Activated CD4-positive, alpha-beta T cell treated with anti-CD3 and anti-CD28 coated beads, Interleukin-2, amount 10 ng/mL, durations not matched to agents 7 days and 5 days (primary cell): ENCODE measurements at regions of chr1 and their contacts with region 1.

Region 1: DNA sequence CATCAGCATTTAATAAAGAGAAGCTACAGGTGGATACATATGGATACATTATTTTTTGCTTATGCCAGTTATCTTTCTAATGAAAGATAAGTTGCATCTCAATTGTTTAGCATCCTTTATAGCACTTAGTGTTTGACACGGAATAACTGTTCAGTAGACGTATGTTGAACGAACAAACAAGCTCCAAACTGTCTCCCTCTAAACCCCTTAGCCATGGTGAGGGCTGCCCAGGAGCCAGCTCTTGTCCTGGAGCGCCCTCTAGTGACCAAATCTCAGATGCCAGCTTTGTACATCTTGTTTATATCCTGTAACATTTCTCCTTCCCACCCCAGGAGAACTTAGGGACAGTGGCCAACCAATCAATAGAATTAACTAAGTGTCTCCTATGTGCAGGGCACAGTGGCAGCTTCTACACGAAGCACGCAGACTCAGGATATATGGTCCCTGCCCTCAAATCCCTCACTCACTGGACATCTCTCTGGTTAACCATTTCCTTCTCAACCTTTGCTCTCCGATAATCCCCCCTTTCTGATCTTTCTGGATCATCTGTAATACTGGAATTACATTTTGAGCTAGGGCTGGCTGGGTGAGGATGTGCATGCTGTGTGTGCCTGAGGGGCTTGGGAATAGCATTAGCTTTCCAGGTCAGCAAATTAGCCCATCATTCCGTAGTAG is 22.9 kb downstream of the KCNA10 start:
- DNase-seq: peak; percentile 86
- H3K4me3 Mint-ChIP-seq: no peak overlapping the region
- H3K27ac Mint-ChIP-seq: no peak overlapping the region
- H3K4me1 Mint-ChIP-seq: peaks cover 4% of the 10 kb centered on the region
- H3K27me3 Mint-ChIP-seq: no peaks in the 10 kb centered on the region

Region 2: GRCh38 chr1:110196917-110197765 is 298.9 kb before region 1 on chr1:
- CTCF ChIA-PET with region 1: interaction called, 44 read pairs
- POLR2A ChIA-PET with region 1: no interaction called
- DNase-seq: peak; percentile 75
- H3K4me3 Mint-ChIP-seq: no peak overlapping the region
- H3K27ac Mint-ChIP-seq: no peak overlapping the region
- H3K4me1 Mint-ChIP-seq: no peaks in the 10 kb centered on the region
- H3K27me3 Mint-ChIP-seq: no peaks in the 10 kb centered on the region

Region 3: GRCh38 chr1:110407260-110408210 is 88.5 kb before region 1 on chr1 and contains the start of gene LAMTOR5:
- CTCF ChIA-PET with region 1: interaction called, 31 read pairs
- POLR2A ChIA-PET with region 1: no interaction called
- DNase-seq: peak; percentile 95
- H3K4me3 Mint-ChIP-seq: peak within 1 kb of the TSS; percentile 99
- H3K27ac Mint-ChIP-seq: peak within 1 kb of the TSS; percentile 100
- H3K4me1 Mint-ChIP-seq: peaks cover 22% of the 10 kb centered on the region
- H3K27me3 Mint-ChIP-seq: no peaks in the 10 kb centered on the region
- total RNA-seq, gene LAMTOR5: 113 to 120 TPM

Region 4: GRCh38 chr1:110425612-110426152 is 70.4 kb before region 1 on chr1:
- CTCF ChIA-PET with region 1: no interaction called
- POLR2A ChIA-PET with region 1: no interaction called
- DNase-seq: no peak
- H3K4me3 Mint-ChIP-seq: no peak overlapping the region
- H3K27ac Mint-ChIP-seq: no peak overlapping the region
- H3K4me1 Mint-ChIP-seq: peaks cover 14% of the 10 kb centered on the region
- H3K27me3 Mint-ChIP-seq: peaks cover 18% of the 10 kb centered on the region

Region 5: DNA sequence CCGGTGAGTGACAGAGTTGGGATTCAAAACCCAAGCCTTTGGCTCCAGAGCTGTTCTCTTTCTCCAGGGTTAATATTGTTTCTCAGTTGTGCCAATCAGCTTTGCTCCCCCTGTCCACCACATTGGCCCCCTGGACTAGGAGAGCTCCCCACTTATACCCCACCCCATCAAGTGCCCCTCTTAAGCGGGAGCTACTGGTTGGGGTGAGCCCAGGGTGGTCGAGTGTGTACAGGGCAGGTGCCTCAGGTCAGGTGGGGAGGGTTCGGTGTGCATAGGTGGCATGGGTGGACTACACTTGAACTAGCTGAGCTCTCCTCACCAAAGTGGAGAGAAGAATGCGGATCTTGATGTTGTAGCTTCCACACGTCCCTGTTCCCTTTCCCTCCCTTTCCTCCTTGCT is 95.9 kb after region 1 on chr1:
- CTCF ChIA-PET with region 1: no interaction called
- POLR2A ChIA-PET with region 1: no interaction called
- DNase-seq: no peak
- H3K4me3 Mint-ChIP-seq: no peak overlapping the region
- H3K27ac Mint-ChIP-seq: no peak overlapping the region
- H3K4me1 Mint-ChIP-seq: peaks cover 11% of the 10 kb centered on the region
- H3K27me3 Mint-ChIP-seq: peaks cover 12% of the 10 kb centered on the region